Dorsolateral prefrontal cortex (tissue), 120 donors: ENCODE measurements at regions of chr10 and their contacts with region 1.

Region 1: GRCh38 chr10:13056456-13057077 is 43.4 kb upstream of the OPTN start:
- DNase-seq: peak in 1 of 10 donors; percentile 32
- H3K4me3 ChIP-seq: no peak overlapping the region
- H3K27ac ChIP-seq: no peak overlapping the region
- H3K27me3 ChIP-seq: no peaks in the 10 kb centered on the region
- CTCF ChIP-seq: peak in 48 of 56 donors; percentile 10 to 63 (median 36)

Region 2: GRCh38 chr10:12782537-12782936 is 274.0 kb before region 1 on chr10:
- intact Hi-C with region 1: loop called in 1 of 2 experiments (anchors 5 kb)
- DNase-seq: no peak
- H3K4me3 ChIP-seq: peak overlapping the region in 3 of 59 donors; percentile 20 to 39 (median 26)
- H3K27ac ChIP-seq: peak overlapping the region in 52 of 59 donors; percentile 7 to 89 (median 72)
- H3K27me3 ChIP-seq: no peaks in the 10 kb centered on the region
- CTCF ChIP-seq: peak in 55 of 56 donors; percentile 38 to 73 (median 61)

Region 3: DNA sequence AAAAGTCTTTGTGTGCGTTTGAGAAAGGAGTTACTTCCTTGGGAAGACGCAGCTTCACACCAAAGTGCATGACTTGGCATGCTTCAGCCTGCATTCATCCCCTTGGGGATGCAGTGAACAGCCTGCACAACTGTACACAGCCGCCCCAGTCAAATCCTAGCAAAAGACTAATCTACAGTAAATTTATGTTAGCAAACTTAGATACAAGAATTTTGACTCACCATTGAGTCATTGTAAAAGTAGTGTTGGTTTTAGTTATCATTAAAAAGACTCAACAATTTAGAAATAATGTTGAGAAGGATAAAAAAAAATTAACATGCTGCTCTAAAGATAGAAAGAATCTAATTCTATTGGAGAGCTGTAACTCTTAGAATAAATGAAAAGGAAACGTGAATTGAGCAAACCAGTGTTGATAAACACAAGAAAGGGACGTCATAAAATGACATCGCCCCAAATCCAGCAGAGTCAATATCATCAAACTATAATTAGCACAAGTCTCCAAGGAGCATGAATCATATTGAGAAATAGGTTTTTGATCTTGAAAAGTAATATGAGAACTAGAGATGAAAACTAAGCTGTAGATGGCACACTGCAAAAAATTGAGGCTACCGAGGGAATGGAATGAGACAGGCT is 31.5 kb after region 1 on chr10:
- intact Hi-C with region 1: no loop called
- DNase-seq: no peak
- H3K4me3 ChIP-seq: no peak overlapping the region
- H3K27ac ChIP-seq: peak overlapping the region in 29 of 59 donors; percentile 2 to 68 (median 39)
- H3K27me3 ChIP-seq: no peaks in the 10 kb centered on the region
- CTCF ChIP-seq: no peak